ENCODE measurements at regions of chr9 and their contacts with region 1.

Region 1: GRCh38 chr9:123608104-123608503 is 252.1 kb downstream of the CRB2 start:
- DNase-seq: no peak
- H3K4me3 ChIP-seq: no peak overlapping the region
- H3K27ac ChIP-seq: no peak overlapping the region
- H3K4me1 ChIP-seq: no peaks in the 10 kb centered on the region
- H3K27me3 ChIP-seq: no peaks in the 10 kb centered on the region
- CTCF ChIP-seq: no peak
- POLR2A ChIP-seq: no peak

Region 2: GRCh38 chr9:123556464-123557435 is 51.4 kb before region 1 on chr9:
- intact Hi-C with region 1: loop called in 1 of 2 experiments (anchors 5 kb)
- DNase-seq: no peak
- H3K4me3 ChIP-seq: no peak overlapping the region
- H3K27ac ChIP-seq: no peak overlapping the region
- H3K4me1 ChIP-seq: no peaks in the 10 kb centered on the region
- H3K27me3 ChIP-seq: no peaks in the 10 kb centered on the region
- CTCF ChIP-seq: no peak
- POLR2A ChIP-seq: no peak